Gastrocnemius medialis (tissue), 4 donors: ENCODE measurements at regions of chr2 and their contacts with region 1.

Region 1: GRCh38 chr2:47386551-47386950 is 16.4 kb upstream of the MSH2 start:
- DNase-seq: no peak
- ATAC-seq: no peak
- H3K4me3 ChIP-seq: no peak overlapping the region
- H3K27ac ChIP-seq: no peak overlapping the region
- H3K4me1 ChIP-seq: no peaks in the 10 kb centered on the region
- H3K27me3 ChIP-seq: no peaks in the 10 kb centered on the region
- CTCF ChIP-seq: no peak
- POLR2A ChIP-seq: no peak

Region 2: DNA sequence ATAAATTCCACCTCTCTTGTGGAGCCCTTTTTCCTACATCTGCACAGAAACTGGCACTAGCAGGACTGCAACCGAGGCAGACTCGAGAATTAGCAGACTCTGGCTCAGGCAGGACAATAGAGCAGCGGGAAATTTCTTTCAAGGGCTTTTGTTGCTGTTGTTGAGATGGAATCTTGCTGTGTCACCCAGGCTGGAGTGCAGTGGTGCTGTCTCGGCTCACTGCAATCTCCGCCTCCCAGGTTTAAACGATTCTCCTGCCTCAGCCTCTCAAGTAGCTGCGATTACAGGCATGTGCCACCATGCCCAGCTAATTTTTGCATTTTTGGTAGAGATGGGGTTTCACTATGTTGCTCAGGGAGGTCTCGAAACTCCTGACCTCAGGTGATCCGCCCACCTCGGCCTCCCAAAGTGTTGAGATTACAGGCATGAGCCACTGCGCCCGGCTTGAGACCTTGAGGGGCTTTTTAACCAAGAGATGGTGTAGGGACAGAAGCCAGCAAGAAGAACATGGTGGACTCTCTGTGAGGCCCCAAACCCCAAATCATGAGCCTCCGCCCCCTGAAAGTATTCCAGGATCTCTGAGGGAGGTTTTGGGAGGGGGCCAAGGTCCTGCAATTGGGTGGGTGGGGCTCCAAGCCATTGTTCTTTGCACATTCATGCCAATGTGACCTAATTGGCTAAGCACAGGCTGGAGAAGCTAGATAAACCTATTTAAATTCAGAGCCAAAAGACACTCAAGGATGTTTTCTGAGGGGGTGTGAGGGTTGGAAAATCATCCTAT is 52.0 kb before region 1 on chr2:
- in situ Hi-C with region 1: loop called in 3 of 4 experiments (anchors 5 to 10 kb)
- intact Hi-C with region 1: loop called (anchors 2 kb)
- DNase-seq: no peak
- ATAC-seq: no peak
- H3K4me3 ChIP-seq: no peak overlapping the region
- H3K27ac ChIP-seq: peak overlapping the region in 1 of 4 donors; percentile 22
- H3K4me1 ChIP-seq: no peaks in the 10 kb centered on the region
- H3K27me3 ChIP-seq: no peaks in the 10 kb centered on the region
- CTCF ChIP-seq: no peak
- POLR2A ChIP-seq: no peak

Region 3: GRCh38 chr2:47339745-47340541 is 46.6 kb before region 1 on chr2:
- in situ Hi-C with region 1: loop called in 3 of 4 experiments (anchors 5 to 10 kb)
- intact Hi-C with region 1: loop called (anchors 2 kb)
- DNase-seq: no peak
- ATAC-seq: no peak
- H3K4me3 ChIP-seq: no peak overlapping the region
- H3K27ac ChIP-seq: no peak overlapping the region
- H3K4me1 ChIP-seq: peaks cover 8% of the 10 kb centered on the region in 2 donors
- H3K27me3 ChIP-seq: no peaks in the 10 kb centered on the region
- CTCF ChIP-seq: no peak
- POLR2A ChIP-seq: no peak

Region 4: DNA sequence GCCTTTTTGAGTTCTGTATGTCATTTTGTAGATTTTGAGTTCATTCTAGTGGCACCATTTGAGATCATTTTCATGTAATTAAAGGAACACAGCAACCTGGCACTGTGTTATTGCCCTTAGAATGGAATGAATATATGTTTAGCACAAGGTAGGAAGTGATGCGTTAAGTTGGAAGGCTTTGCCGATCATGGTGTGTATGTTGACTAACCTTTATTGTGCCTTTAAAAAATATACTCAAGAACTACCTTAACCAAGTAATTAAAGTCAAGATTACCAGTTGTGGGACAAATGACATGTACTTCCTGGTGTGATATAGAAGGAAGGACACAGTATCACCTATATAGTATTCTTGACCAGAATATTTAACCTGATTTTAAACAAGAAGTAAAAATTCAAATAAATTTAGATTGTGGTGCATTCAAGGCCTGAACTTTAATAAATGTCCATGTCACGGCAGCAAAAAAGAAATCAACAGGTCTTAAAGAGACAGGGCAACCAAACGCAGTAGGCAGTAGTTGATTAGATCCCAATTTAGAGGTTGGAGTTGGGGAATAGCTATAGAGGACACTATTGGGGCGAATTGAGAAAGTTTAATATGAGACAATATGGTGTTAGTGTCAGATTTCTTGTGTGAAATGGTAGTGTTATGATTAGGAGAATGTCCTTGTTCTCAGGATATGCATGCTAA is 85.0 kb after region 1 on chr2:
- in situ Hi-C with region 1: no loop called
- intact Hi-C with region 1: no loop called
- DNase-seq: no peak
- ATAC-seq: no peak
- H3K4me3 ChIP-seq: no peak overlapping the region
- H3K27ac ChIP-seq: no peak overlapping the region
- H3K4me1 ChIP-seq: no peaks in the 10 kb centered on the region
- H3K27me3 ChIP-seq: no peaks in the 10 kb centered on the region
- CTCF ChIP-seq: no peak
- POLR2A ChIP-seq: no peak

Region 5: DNA sequence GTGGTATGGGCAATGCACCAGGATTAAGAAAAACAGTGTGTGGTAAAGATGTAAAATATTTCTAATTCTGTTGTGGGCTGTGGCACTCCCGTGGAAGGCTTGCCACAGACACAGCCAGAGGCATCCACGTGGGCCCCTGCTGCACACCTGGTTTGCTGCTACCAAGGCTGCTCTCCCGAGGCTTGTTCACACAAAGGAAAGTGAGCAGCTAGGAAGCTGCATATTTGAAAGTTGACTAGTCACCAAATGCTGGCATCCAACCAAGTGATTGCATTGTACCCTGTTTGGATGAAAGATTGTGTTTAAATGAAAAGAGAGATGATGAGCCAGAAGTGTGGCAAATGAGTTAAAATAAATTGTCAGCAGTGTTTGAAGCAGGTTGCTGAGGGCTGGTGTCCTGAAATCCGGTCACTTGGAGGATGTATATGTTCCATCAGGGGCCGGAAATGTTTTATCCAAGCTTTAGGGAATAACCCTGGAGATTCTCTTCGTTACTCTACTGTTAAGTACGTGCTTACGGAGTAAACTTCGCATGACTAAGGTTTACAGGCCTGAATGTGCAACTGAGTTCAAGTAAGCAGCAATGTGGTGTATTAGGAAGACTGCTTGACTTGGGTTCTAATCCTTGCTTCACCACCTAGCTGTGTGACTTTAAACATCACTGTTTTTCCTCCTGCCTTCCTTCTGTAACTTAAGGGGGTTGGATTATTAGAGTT is 102.5 kb after region 1 on chr2:
- in situ Hi-C with region 1: no loop called
- intact Hi-C with region 1: no loop called
- DNase-seq: no peak
- ATAC-seq: no peak
- H3K4me3 ChIP-seq: no peak overlapping the region
- H3K27ac ChIP-seq: no peak overlapping the region
- H3K4me1 ChIP-seq: no peaks in the 10 kb centered on the region
- H3K27me3 ChIP-seq: no peaks in the 10 kb centered on the region
- CTCF ChIP-seq: no peak
- POLR2A ChIP-seq: no peak